CD8-positive, alpha-beta memory T cell (primary cell): ENCODE measurements at regions of chr14 and their contacts with region 1.

Region 1: DNA sequence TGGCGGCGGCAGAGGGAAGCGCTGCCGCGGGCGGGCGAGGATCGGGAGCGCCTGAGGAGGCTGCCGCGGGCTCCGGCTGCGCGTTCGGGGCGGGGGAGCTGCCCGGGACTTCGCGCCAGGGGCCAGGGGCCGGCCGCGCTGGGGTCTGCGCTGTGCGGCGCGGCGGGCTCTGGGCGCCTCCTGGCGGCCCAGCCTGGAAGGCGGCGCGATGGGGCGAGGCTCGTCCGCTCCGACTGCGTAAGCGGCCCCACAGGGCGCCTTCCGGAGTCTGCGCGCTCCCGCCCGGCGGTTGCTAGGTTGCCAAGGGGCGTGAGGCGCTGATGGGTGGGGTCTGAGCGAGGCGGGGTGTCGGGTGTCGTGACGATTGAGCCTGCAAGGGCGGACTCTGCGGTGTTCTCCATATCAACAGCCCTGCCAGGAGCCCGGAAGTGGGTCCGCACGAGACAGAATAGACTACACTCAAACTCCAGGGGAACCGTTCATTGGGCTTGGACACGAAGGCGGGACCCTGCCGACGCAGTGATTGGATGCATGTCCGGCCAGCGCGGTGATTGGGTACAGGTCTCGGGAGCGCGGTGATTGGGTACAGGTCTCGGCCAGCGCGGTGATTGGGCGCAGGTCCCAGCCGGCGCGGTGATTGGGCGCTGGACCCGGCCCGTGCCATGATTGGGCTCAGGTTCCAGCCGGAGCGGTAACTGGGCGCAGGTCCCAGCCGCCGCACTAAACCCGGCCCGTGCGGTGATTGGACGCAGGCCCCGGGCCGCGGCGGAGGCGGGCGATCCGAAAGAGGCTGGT is at the start of gene TEDC1:
- DNase-seq: peak in 4 of 5 donors; percentile 98 to 100 (median 98)
- H3K4me3 ChIP-seq: peak within 1 kb of the TSS; percentile 67
- H3K4me3 Mint-ChIP-seq: peak within 1 kb of the TSS; percentile 83 to 94 (median 92)
- H3K27ac ChIP-seq: peak within 1 kb of the TSS; percentile 97
- H3K27ac Mint-ChIP-seq: peak within 1 kb of the TSS; percentile 96 to 100 (median 98)
- H3K4me1 ChIP-seq: peaks cover 34% of the 10 kb centered on the region
- H3K4me1 Mint-ChIP-seq: peaks cover 9 to 49% (median 18%) of the 10 kb centered on the region in 3 donors
- H3K27me3 ChIP-seq: no peaks in the 10 kb centered on the region
- H3K27me3 Mint-ChIP-seq: peaks cover 0 to 5% of the 10 kb centered on the region in 2 donors
- total RNA-seq, gene TEDC1: 52.1 to 56.5 TPM

Region 2: GRCh38 chr14:105369653-105370040 is 121.1 kb before region 1 on chr14:
- CTCF ChIA-PET with region 1: interaction called, 72 read pairs
- POLR2A ChIA-PET with region 1: interaction called, 18 read pairs
- DNase-seq: no peak
- H3K4me3 ChIP-seq: no peak overlapping the region
- H3K4me3 Mint-ChIP-seq: no peak overlapping the region
- H3K27ac ChIP-seq: no peak overlapping the region
- H3K27ac Mint-ChIP-seq: no peak overlapping the region
- H3K4me1 ChIP-seq: peaks cover 14% of the 10 kb centered on the region
- H3K4me1 Mint-ChIP-seq: peaks cover 3 to 5% (median 5%) of the 10 kb centered on the region in 3 donors
- H3K27me3 ChIP-seq: no peaks in the 10 kb centered on the region
- H3K27me3 Mint-ChIP-seq: no peaks in the 10 kb centered on the region

Region 3: GRCh38 chr14:105375635-105376057 is 115.1 kb before region 1 on chr14:
- CTCF ChIA-PET with region 1: interaction called, 72 read pairs
- POLR2A ChIA-PET with region 1: interaction called, 18 read pairs
- DNase-seq: peak in 1 of 5 donors; percentile 9
- H3K4me3 ChIP-seq: no peak overlapping the region
- H3K4me3 Mint-ChIP-seq: peak overlapping the region in 3 of 7 donors; percentile 15 to 77 (median 39)
- H3K27ac ChIP-seq: no peak overlapping the region
- H3K27ac Mint-ChIP-seq: peak overlapping the region in 2 of 8 donors; percentile 38 to 86
- H3K4me1 ChIP-seq: peaks cover 19% of the 10 kb centered on the region
- H3K4me1 Mint-ChIP-seq: peaks cover 11 to 13% (median 13%) of the 10 kb centered on the region in 3 donors
- H3K27me3 ChIP-seq: no peaks in the 10 kb centered on the region
- H3K27me3 Mint-ChIP-seq: no peaks in the 10 kb centered on the region

Region 4: DNA sequence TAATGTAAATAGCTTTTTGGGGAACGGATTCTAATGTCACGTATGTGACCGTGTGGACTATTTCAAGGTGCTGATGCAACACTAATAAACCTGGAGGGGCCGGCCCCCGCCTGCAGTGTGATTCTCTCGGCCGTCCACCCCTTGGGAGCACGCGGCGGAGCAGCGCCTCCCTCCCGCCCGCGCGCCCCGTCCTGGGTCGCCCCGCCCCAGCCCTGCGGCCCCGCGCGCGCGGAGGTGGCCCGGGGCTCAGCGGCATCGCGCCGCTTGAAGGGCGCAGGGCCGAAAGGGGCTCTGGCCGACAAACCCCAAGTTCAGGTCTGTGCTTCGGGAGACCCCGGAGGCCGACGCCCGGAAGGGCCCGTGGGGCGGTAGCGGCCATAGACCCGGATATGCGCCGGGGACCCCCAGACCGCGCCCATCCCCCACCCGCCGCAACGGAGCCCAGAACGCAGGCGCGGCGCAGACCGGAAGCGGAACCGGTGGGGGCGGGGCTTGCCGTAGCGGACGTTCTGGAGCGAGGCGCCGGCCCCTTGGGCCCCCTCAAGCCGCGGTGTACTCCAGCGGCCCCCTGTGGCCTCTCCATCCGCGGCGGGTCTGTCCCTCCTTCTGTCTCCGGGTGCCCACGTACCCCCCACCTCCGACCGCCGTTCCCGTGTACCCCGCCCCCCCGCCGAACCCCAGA is 92.6 kb before region 1 on chr14 and contains the start of gene TEX22:
- CTCF ChIA-PET with region 1: interaction called, 10 read pairs
- POLR2A ChIA-PET with region 1: no interaction called
- DNase-seq: peak; percentile 82 to 89 (median 85)
- H3K4me3 ChIP-seq: peak within 1 kb of the TSS; percentile 70
- H3K4me3 Mint-ChIP-seq: peak within 1 kb of the TSS; percentile 77 to 94 (median 84)
- H3K27ac ChIP-seq: peak within 1 kb of the TSS; percentile 78
- H3K27ac Mint-ChIP-seq: peak within 1 kb of the TSS; percentile 32 to 93 (median 82)
- H3K4me1 ChIP-seq: peaks cover 18% of the 10 kb centered on the region
- H3K4me1 Mint-ChIP-seq: peaks cover 5 to 23% (median 10%) of the 10 kb centered on the region in 3 donors
- H3K27me3 ChIP-seq: no peaks in the 10 kb centered on the region
- H3K27me3 Mint-ChIP-seq: no peaks in the 10 kb centered on the region
- total RNA-seq, gene TEX22: 1.4 to 2.9 TPM

Region 5: DNA sequence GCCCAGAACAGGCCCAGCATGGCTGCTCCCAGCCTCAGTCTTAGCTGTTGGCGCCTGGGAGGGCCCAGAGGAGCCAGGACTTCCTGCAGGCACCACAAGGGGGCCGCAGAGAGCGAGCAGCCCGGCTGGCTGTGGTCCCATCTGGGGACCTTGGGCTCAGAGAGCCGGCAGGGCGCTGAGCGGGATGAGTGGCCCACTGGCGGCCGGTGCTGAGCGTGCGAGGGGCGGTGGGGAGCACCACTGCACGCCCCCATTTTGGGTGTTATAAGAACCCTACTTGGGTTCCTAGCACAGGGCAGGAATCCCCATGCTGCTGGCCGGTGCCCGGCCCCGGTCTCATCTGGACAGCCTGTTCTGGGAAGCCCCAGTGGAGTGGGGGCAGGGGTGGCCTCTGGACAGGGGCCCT is 42.1 kb before region 1 on chr14:
- CTCF ChIA-PET with region 1: interaction called, 26 read pairs
- POLR2A ChIA-PET with region 1: interaction called, 5 read pairs
- DNase-seq: peak; percentile 51 to 75 (median 55)
- H3K4me3 ChIP-seq: no peak overlapping the region
- H3K4me3 Mint-ChIP-seq: no peak overlapping the region
- H3K27ac ChIP-seq: no peak overlapping the region
- H3K27ac Mint-ChIP-seq: no peak overlapping the region
- H3K4me1 ChIP-seq: no peaks in the 10 kb centered on the region
- H3K4me1 Mint-ChIP-seq: no peaks in the 10 kb centered on the region
- H3K27me3 ChIP-seq: no peaks in the 10 kb centered on the region
- H3K27me3 Mint-ChIP-seq: no peaks in the 10 kb centered on the region

Region 6: GRCh38 chr14:105473677-105474482 is 16.9 kb before region 1 on chr14:
- CTCF ChIA-PET with region 1: interaction called, 63 read pairs
- POLR2A ChIA-PET with region 1: interaction called, 6 read pairs
- DNase-seq: peak; percentile 58 to 86 (median 75)
- H3K4me3 ChIP-seq: peak overlapping the region; percentile 40
- H3K4me3 Mint-ChIP-seq: peak overlapping the region; percentile 63 to 91 (median 74)
- H3K27ac ChIP-seq: peak overlapping the region; percentile 38
- H3K27ac Mint-ChIP-seq: peak overlapping the region in 5 of 8 donors; percentile 58 to 83 (median 60)
- H3K4me1 ChIP-seq: peaks cover 35% of the 10 kb centered on the region
- H3K4me1 Mint-ChIP-seq: peaks cover 5 to 32% (median 7%) of the 10 kb centered on the region in 3 donors
- H3K27me3 ChIP-seq: no peaks in the 10 kb centered on the region
- H3K27me3 Mint-ChIP-seq: peaks cover 0 to 3% of the 10 kb centered on the region in 2 donors

Region 7: DNA sequence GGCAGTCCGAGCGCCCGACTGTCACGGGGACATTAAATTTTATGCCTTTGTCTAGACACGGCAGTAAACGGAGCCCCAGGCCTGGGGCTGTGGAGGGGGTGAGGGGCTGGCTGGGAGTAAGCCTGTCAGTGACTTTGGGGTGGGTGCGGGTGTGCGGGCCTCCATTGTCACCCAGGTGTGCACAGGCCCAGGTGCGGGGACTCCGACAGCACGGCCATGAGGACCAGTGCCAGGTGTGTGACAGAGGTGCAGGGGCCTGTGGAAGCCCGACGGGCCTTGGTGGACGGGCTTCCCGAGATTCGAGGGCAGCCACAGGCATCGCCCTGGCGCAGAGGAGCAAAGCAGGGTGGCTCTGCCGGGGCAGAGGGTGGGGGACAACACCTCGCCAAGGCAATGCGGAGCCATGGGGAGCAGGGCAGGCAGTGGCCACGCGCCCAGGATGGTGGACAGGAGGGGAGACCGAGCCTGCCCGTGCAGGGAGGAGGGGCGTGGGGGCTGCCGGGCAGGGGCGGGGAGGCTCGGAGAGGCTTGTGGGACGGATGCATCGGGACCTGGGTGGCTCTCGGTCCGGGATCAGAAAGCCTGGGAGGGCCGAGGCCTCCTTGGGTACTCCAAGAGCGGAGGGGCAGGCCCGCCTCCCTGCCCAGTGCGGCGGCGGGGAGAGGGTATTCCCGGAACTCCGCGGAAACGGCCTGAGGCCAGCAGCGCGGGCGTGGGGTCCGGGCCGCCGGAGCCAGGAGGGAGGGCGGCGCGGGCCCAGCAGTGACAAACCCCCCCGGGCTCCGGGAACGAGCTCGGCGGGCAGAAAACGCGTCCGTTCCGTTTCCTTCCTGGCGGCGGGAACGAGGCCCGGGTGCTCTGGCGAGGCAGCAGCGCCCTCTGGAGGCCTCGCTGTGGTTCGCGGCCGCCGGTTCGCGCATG is 37.2 kb after region 1 on chr14:
- CTCF ChIA-PET with region 1: interaction called, 19 read pairs
- POLR2A ChIA-PET with region 1: interaction called, 10 read pairs
- DNase-seq: peak; percentile 71 to 83 (median 73)
- H3K4me3 ChIP-seq: peak overlapping the region; percentile 32
- H3K4me3 Mint-ChIP-seq: peak overlapping the region; percentile 56 to 82 (median 69)
- H3K27ac ChIP-seq: no peak overlapping the region
- H3K27ac Mint-ChIP-seq: peak overlapping the region in 1 of 8 donors; percentile 60
- H3K4me1 ChIP-seq: peaks cover 26% of the 10 kb centered on the region
- H3K4me1 Mint-ChIP-seq: peaks cover 4 to 38% (median 7%) of the 10 kb centered on the region in 3 donors
- H3K27me3 ChIP-seq: peaks cover 17% of the 10 kb centered on the region
- H3K27me3 Mint-ChIP-seq: peaks cover 15 to 18% of the 10 kb centered on the region in 2 donors